Endothelial cell of umbilical vein (primary cell): ENCODE measurements at regions of chr5 and their contacts with region 1.

Region 1: DNA sequence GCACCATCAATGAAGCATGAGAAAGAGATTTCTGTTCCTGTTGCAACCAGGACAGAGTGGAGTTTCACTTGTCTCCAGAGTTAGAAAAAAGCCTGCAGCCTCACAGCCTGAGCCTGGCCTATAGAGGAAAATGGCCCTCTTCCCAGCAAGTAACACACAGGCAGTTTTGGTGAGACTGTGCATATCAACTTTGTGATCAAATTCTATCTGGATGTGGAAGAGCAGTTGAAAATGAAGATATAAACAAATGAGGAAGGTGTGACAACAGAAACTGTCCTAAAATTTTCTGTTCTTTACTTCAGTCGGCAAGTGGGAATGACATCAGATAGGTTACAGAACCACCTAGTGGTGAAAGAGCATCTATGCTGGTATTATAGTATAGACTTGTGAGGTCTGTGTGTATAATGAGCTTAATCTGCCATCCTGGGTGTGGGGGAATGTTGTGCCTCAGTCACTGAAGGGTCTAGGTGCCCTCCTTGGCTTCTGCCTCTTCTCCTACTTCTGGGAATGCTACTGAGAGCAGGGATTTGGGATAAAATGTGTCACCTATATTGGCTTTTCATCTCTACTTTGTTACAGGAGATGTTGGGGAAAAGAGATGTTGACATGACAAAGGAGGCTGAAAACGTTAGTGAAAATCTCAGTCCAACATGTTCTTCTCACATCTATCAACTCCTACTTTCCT is 28.2 kb downstream of the YIPF5 start:
- DNase-seq: peak; percentile 68
- H3K4me3 ChIP-seq: no peak overlapping the region
- H3K27ac ChIP-seq: no peak overlapping the region
- H3K4me1 ChIP-seq: peaks cover 29% of the 10 kb centered on the region
- H3K27me3 ChIP-seq: no peaks in the 10 kb centered on the region
- CTCF ChIP-seq: peak; percentile 55 to 71
- POLR2A ChIP-seq: no peak

Region 2: GRCh38 chr5:143592648-143593047 is 549.6 kb before region 1 on chr5:
- CTCF ChIA-PET with region 1: no interaction called
- POLR2A ChIA-PET with region 1: no interaction called
- dilution Hi-C with region 1: no loop called
- intact Hi-C with region 1: loop called (anchors 10 kb)
- DNase-seq: peak; percentile 42
- H3K4me3 ChIP-seq: no peak overlapping the region
- H3K27ac ChIP-seq: no peak overlapping the region
- H3K4me1 ChIP-seq: peaks cover 16% of the 10 kb centered on the region
- H3K27me3 ChIP-seq: no peaks in the 10 kb centered on the region
- CTCF ChIP-seq: no peak
- POLR2A ChIP-seq: no peak

Region 3: GRCh38 chr5:143968011-143968878 is 174.0 kb before region 1 on chr5:
- CTCF ChIA-PET with region 1: interaction called, 31 read pairs
- POLR2A ChIA-PET with region 1: no interaction called
- dilution Hi-C with region 1: no loop called
- intact Hi-C with region 1: loop called (anchors 1 kb)
- DNase-seq: peak; percentile 54
- H3K4me3 ChIP-seq: no peak overlapping the region
- H3K27ac ChIP-seq: no peak overlapping the region
- H3K4me1 ChIP-seq: peaks cover 9% of the 10 kb centered on the region
- H3K27me3 ChIP-seq: no peaks in the 10 kb centered on the region
- CTCF ChIP-seq: peak in 1 of 2 donors; percentile 18
- POLR2A ChIP-seq: no peak

Region 4: DNA sequence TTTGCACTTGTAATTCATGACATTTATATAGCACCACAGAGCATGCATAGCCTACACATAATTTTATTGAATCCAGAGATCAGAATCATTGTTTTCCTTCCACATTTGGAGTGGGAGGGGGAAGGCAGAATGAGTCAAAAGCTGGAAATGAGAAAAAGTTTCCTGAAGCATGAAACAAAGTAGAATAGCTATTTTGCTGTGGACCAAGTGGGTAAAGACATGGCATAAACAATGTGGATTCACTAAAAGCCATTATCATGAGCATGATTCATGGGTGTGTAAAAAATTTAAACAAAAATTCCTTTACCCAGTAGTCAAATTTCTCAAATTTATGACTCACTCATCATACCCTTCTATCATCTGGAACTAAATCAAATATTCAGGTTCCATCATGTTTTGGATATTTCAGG is 69.8 kb before region 1 on chr5:
- CTCF ChIA-PET with region 1: interaction called, 6 read pairs
- POLR2A ChIA-PET with region 1: no interaction called
- dilution Hi-C with region 1: no loop called
- intact Hi-C with region 1: loop called (anchors 2 kb)
- DNase-seq: peak; percentile 64
- H3K4me3 ChIP-seq: no peak overlapping the region
- H3K27ac ChIP-seq: peak overlapping the region; percentile 22
- H3K4me1 ChIP-seq: peaks cover 11% of the 10 kb centered on the region
- H3K27me3 ChIP-seq: no peaks in the 10 kb centered on the region
- CTCF ChIP-seq: no peak
- POLR2A ChIP-seq: no peak

Region 5: DNA sequence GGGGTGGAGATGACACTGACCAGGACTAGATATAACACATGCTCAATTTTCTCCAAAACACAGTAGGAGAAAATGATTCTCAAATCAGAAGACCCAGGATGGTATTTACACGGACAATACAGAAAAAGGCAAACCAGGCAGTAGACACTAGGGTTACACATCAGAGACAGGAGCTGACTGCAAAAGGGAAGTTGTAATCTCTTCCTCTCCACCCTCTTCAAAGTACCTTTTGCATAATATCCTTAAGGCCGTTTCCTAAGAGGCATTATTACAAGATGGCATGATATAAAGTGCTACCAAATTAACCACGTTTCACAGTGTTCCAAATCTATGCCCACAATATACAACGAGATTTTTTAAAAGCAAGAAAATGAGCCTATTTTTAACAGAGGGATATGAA is 11.0 kb before region 1 on chr5:
- CTCF ChIA-PET with region 1: interaction called, 17 read pairs
- POLR2A ChIA-PET with region 1: no interaction called
- dilution Hi-C with region 1: no loop called
- intact Hi-C with region 1: no loop called
- DNase-seq: no peak
- H3K4me3 ChIP-seq: no peak overlapping the region
- H3K27ac ChIP-seq: no peak overlapping the region
- H3K4me1 ChIP-seq: no peaks in the 10 kb centered on the region
- H3K27me3 ChIP-seq: no peaks in the 10 kb centered on the region
- CTCF ChIP-seq: no peak
- POLR2A ChIP-seq: no peak

Region 6: GRCh38 chr5:144191998-144192397 is 49.7 kb after region 1 on chr5:
- CTCF ChIA-PET with region 1: interaction called, 16 read pairs
- POLR2A ChIA-PET with region 1: no interaction called
- dilution Hi-C with region 1: no loop called
- intact Hi-C with region 1: loop called (anchors 1 kb)
- DNase-seq: peak; percentile 88
- H3K4me3 ChIP-seq: no peak overlapping the region
- H3K27ac ChIP-seq: peak overlapping the region; percentile 88
- H3K4me1 ChIP-seq: peaks cover 44% of the 10 kb centered on the region
- H3K27me3 ChIP-seq: no peaks in the 10 kb centered on the region
- CTCF ChIP-seq: peak; percentile 43 to 60
- POLR2A ChIP-seq: no peak